ENCODE measurements at regions of chr11 and their contacts with region 1.

Region 1: GRCh38 chr11:61851113-61851899 is 23.2 kb downstream of the FADS2 start:
- DNase-seq: no peak
- ATAC-seq: no peak
- H3K4me3 ChIP-seq: no peak overlapping the region
- H3K4me3 Mint-ChIP-seq: no peak overlapping the region
- H3K27ac ChIP-seq: no peak overlapping the region
- H3K27ac Mint-ChIP-seq: no peak overlapping the region
- H3K4me1 ChIP-seq: no peaks in the 10 kb centered on the region
- H3K4me1 Mint-ChIP-seq: no peaks in the 10 kb centered on the region
- H3K27me3 ChIP-seq: no peaks in the 10 kb centered on the region
- H3K27me3 Mint-ChIP-seq: no peaks in the 10 kb centered on the region

Region 2: GRCh38 chr11:62004473-62004872 is 153.2 kb after region 1 on chr11:
- CTCF ChIA-PET with region 1: no interaction called
- POLR2A ChIA-PET with region 1: interaction called in 1 of 2 experiments, 12 read pairs
- DNase-seq: peak in 1 of 35 experiments; percentile 10
- ATAC-seq: no peak
- H3K4me3 ChIP-seq: no peak overlapping the region
- H3K4me3 Mint-ChIP-seq: no peak overlapping the region
- H3K27ac ChIP-seq: no peak overlapping the region
- H3K27ac Mint-ChIP-seq: no peak overlapping the region
- H3K4me1 ChIP-seq: no peaks in the 10 kb centered on the region
- H3K4me1 Mint-ChIP-seq: no peaks in the 10 kb centered on the region
- H3K27me3 ChIP-seq: peaks cover 0 to 8% of the 10 kb centered on the region in 2 experiments
- H3K27me3 Mint-ChIP-seq: peaks cover 4 to 6% of the 10 kb centered on the region in 2 donors